AG04450 (cell line): ENCODE measurements at regions of chr12 and their contacts with region 1.

Region 1: DNA sequence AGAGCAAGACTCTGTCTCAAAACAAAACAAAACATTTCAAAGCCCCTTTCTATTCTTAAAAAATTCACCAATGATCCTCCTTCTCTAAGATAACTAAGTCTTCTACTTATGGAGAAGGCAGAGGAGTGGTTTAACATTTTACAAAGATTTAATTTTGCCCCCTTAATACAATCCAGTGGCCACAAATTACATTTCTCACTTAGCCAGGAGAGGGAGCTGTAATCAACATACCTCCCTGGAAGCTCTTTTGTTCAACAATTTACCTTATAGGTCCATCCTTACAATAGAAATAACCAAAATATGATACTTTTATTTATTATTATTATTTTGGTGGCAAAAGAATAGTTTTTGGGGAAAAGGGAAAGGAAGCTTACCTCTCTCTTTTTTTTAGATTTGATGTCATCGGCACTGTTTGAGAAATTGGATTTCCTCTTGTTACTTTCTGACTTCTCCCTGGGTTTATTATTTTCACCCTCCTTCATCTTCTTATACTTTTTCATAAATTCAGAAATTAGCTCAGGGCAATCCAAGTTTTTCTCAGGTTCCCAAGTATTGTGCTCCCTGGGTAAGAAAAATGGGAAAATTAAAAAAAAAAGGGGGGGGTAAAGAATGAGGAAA is 28.1 kb downstream of the CBX5 start:
- DNase-seq: no peak
- H3K4me3 ChIP-seq: no peak overlapping the region
- H3K27ac ChIP-seq: no peak overlapping the region
- H3K27me3 ChIP-seq: no peaks in the 10 kb centered on the region
- CTCF ChIP-seq: peak; percentile 76

Region 2: GRCh38 chr12:54159140-54159539 is 92.6 kb before region 1 on chr12:
- CTCF ChIA-PET with region 1: no interaction called
- POLR2A ChIA-PET with region 1: no interaction called
- DNase-seq: no peak
- H3K4me3 ChIP-seq: no peak overlapping the region
- H3K27ac ChIP-seq: no peak overlapping the region
- H3K27me3 ChIP-seq: peaks cover 51% of the 10 kb centered on the region
- CTCF ChIP-seq: no peak

Region 3: DNA sequence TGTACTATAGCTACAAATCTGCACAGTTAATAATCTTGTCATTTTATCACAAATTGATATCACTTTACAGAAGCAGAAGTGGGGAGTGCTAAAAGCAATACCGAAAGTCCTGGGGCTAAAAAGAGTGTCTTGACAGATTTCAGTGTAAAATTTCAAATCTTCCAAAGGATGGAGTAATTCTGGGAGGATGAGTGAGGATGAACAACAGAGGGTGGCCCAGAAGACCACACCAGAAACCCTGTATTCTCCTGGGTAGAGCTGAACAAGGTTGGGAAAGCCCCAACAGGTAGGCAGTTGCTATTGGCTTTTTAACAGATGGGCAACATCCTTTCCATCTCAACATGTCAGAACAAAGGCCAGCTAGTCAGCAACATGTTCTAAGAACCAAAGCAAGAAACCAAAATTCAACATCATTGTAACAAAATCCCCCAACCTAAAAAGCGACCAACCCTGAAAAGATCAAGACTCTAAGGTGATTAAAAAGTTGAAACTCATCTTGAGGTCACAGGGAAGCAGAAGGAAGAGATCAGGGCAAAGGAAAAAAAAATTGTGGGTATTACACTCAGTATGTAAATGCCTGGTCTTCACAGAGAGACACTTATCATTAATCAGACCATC is 10.7 kb before region 1 on chr12:
- CTCF ChIA-PET with region 1: interaction called, 88 read pairs
- POLR2A ChIA-PET with region 1: no interaction called
- DNase-seq: no peak
- H3K4me3 ChIP-seq: no peak overlapping the region
- H3K27ac ChIP-seq: no peak overlapping the region
- H3K27me3 ChIP-seq: no peaks in the 10 kb centered on the region
- CTCF ChIP-seq: no peak

Region 4: DNA sequence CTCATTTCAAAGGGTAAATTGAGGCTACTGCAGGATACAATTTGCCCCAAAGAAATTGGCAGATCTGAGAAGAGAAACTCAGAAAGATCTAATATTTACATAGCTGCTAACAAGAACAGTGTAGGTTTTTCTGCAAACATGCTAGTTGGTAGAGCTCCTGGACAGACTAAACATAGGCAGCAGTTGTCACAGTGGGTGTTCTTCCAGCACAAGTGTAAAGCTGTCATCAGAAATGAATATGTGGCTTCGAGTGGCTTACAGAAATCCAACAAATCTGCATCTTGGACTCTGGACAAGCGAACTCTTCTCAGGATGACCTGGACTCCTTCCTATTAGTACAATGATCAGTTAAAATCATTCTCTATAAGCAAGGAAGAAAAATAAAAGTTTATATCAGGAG is 22.2 kb after region 1 on chr12:
- CTCF ChIA-PET with region 1: interaction called, 26 read pairs
- POLR2A ChIA-PET with region 1: no interaction called
- DNase-seq: no peak
- H3K4me3 ChIP-seq: no peak overlapping the region
- H3K27ac ChIP-seq: no peak overlapping the region
- H3K27me3 ChIP-seq: no peaks in the 10 kb centered on the region
- CTCF ChIP-seq: no peak

Region 5: GRCh38 chr12:54294152-54294952 is 42.6 kb after region 1 on chr12:
- CTCF ChIA-PET with region 1: interaction called, 10 read pairs
- POLR2A ChIA-PET with region 1: interaction called, 7 read pairs
- DNase-seq: no peak
- H3K4me3 ChIP-seq: no peak overlapping the region
- H3K27ac ChIP-seq: no peak overlapping the region
- H3K27me3 ChIP-seq: peaks cover 13% of the 10 kb centered on the region
- CTCF ChIP-seq: peak; percentile 82

Region 6: DNA sequence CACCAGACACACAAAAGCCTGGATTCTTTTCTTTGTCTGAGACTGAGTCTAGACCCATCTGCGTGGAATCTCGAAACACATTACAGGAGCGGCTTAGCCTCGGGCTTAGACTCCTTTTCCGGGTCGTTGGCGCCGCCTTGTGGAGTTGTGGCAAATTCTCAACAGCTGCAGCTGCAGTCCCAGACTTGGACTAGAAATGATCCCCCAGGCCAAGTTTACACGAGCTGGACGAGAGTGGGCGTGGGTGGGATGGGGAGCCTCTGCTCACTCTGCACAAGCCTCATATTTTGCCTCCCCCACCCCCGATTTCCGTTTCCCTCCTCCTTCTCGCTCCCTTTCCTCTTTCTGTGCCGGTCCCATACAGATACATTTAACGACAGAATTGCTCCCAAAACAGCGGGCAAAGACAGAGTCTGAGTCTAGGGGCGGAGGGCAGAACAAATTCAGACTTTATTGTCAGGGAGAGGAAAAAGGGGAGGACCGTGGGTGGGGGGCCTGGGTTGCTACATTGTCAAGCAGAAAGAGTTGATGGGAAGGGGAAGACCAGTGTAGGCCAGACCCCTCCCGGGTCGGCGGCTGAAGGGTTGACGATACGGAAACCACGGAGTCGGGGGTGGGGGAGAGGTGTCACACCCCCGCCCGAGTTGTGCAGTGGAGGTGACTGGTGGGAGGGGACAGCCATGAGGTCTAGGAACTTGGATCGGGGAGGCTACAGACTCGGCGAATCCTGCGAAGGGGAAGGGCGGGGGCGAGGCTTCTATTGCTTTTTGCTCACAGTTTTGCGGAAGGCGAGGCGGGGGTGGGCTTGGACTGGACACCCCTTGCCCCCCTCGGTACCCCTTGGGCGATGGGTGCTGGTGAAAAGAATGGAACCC is 117.2 kb after region 1 on chr12:
- CTCF ChIA-PET with region 1: interaction called, 14 read pairs
- POLR2A ChIA-PET with region 1: no interaction called
- DNase-seq: peak; percentile 85
- H3K4me3 ChIP-seq: peak overlapping the region; percentile 27; the same call in 1 of the 2 replicates
- H3K27ac ChIP-seq: peak overlapping the region; percentile 24
- H3K27me3 ChIP-seq: no peaks in the 10 kb centered on the region
- CTCF ChIP-seq: peak; percentile 94

Region 7: GRCh38 chr12:54512506-54512905 is 260.7 kb after region 1 on chr12:
- CTCF ChIA-PET with region 1: no interaction called
- POLR2A ChIA-PET with region 1: no interaction called
- DNase-seq: no peak
- H3K4me3 ChIP-seq: no peak overlapping the region
- H3K27ac ChIP-seq: no peak overlapping the region
- H3K27me3 ChIP-seq: peaks cover 5% of the 10 kb centered on the region
- CTCF ChIP-seq: no peak